PC-9 (cell line): ENCODE measurements at regions of chr7 and their contacts with region 1.

Region 1: GRCh38 chr7:126605056-126605455 is 647.7 kb downstream of the GRM8 start:
- DNase-seq: no peak
- H3K4me3 ChIP-seq: no peak overlapping the region
- H3K27ac ChIP-seq: no peak overlapping the region
- H3K4me1 ChIP-seq: no peaks in the 10 kb centered on the region
- H3K27me3 ChIP-seq: no peaks in the 10 kb centered on the region
- CTCF ChIP-seq: no peak

Region 2: DNA sequence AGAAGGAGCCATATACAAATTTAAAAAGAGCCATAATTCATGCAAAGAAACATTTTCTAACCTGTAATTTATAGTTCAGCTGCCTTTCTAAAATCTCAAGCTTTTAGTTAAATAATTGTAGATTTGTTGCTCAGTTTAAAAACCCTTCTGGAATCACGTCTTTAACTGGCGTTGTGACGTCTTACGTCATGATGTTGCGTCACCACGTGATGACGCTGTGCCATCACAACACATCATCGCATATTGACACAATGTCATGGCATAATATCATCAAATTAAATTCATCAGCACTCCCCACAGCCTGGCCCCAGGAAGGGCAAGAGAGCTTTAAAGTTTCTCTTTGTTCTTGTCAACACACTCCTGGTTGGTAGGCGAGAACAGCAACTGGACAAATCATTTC is 452.9 kb after region 1 on chr7:
- CTCF ChIA-PET with region 1: interaction called, 11 read pairs
- POLR2A ChIA-PET with region 1: no interaction called
- intact Hi-C with region 1: no loop called
- DNase-seq: no peak
- H3K4me3 ChIP-seq: no peak overlapping the region
- H3K27ac ChIP-seq: no peak overlapping the region
- H3K4me1 ChIP-seq: no peaks in the 10 kb centered on the region
- H3K27me3 ChIP-seq: no peaks in the 10 kb centered on the region
- CTCF ChIP-seq: no peak